ENCODE measurements at regions of chr10 and their contacts with region 1.

Region 1: GRCh38 chr10:112471878-112472487 is 25.0 kb downstream of the VTI1A start:
- DNase-seq: no peak
- H3K4me3 Mint-ChIP-seq: no peak overlapping the region
- H3K27ac Mint-ChIP-seq: no peak overlapping the region
- H3K4me1 Mint-ChIP-seq: peaks cover 4% of the 10 kb centered on the region
- H3K27me3 Mint-ChIP-seq: no peaks in the 10 kb centered on the region

Region 2: GRCh38 chr10:112140110-112140970 is 331.6 kb before region 1 on chr10:
- CTCF ChIA-PET with region 1: interaction called, 12 read pairs
- POLR2A ChIA-PET with region 1: no interaction called
- intact Hi-C with region 1: no loop called
- DNase-seq: peak; percentile 86
- H3K4me3 Mint-ChIP-seq: no peak overlapping the region
- H3K27ac Mint-ChIP-seq: no peak overlapping the region
- H3K4me1 Mint-ChIP-seq: no peaks in the 10 kb centered on the region
- H3K27me3 Mint-ChIP-seq: no peaks in the 10 kb centered on the region

Region 3: DNA sequence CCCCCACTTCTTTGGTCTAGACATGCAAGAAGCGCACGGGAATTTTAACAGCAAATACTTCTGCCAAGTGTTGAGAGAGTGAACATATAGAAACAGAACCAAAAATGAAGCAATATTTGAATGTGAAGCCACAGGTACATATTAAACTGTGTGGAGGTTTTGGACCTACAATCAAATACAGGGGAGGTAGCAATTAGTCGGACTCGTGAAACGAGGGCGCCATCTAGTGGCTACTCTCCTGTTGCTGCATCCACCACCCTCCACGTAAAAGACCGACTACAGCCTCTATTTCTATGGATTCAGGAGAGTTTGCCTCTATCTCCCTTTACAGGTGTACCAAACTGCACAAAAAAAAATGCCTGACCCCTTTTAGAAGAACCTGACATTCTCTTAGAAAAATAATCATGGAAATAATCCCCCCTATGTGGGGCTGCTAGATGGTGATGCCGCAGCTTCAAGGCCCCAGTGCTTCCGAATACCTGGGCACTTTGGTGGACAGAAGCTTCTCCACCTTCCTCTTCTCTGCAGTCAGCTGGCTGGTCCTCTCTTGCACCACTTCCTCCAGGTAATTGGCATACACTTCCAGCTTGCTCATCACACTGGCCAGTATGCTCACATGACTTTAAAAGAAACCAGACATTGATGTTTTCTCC is 157.0 kb before region 1 on chr10:
- CTCF ChIA-PET with region 1: interaction called, 25 read pairs
- POLR2A ChIA-PET with region 1: no interaction called
- intact Hi-C with region 1: loop called (anchors 2 kb)
- DNase-seq: peak; percentile 83
- H3K4me3 Mint-ChIP-seq: no peak overlapping the region
- H3K27ac Mint-ChIP-seq: no peak overlapping the region
- H3K4me1 Mint-ChIP-seq: no peaks in the 10 kb centered on the region
- H3K27me3 Mint-ChIP-seq: peaks cover 22% of the 10 kb centered on the region

Region 4: GRCh38 chr10:112446855-112447711 is 24.9 kb before region 1 on chr10 and contains the starts of genes VTI1A and ZDHHC6:
- CTCF ChIA-PET with region 1: interaction called, 36 read pairs
- POLR2A ChIA-PET with region 1: interaction called, 3 read pairs
- intact Hi-C with region 1: loop called (anchors 1 kb)
- DNase-seq: peak; percentile 90
- H3K4me3 Mint-ChIP-seq: peak within 1 kb of the TSS; percentile 96
- H3K27ac Mint-ChIP-seq: peak within 1 kb of the TSS; percentile 91
- H3K4me1 Mint-ChIP-seq: peaks cover 51% of the 10 kb centered on the region
- H3K27me3 Mint-ChIP-seq: no peaks in the 10 kb centered on the region
- total RNA-seq, gene VTI1A: 24.3 to 24.5 TPM
- total RNA-seq, gene ZDHHC6: 40.1 to 40.7 TPM

Region 5: GRCh38 chr10:113126229-113127201 is 654.5 kb after region 1 on chr10:
- CTCF ChIA-PET with region 1: interaction called, 11 read pairs
- POLR2A ChIA-PET with region 1: no interaction called
- intact Hi-C with region 1: loop called (anchors 5 kb)
- DNase-seq: peak; percentile 54
- H3K4me3 Mint-ChIP-seq: no peak overlapping the region
- H3K27ac Mint-ChIP-seq: no peak overlapping the region
- H3K4me1 Mint-ChIP-seq: peaks cover 3% of the 10 kb centered on the region
- H3K27me3 Mint-ChIP-seq: peaks cover 47% of the 10 kb centered on the region

Measured in activated CD4-positive, alpha-beta memory T cell treated with anti-CD3 and anti-CD28 coated beads for 36 hours (primary cell).